Gastrocnemius medialis (tissue), 4 donors: ENCODE measurements at regions of chr19 and their contacts with region 1.

Region 1: GRCh38 chr19:47256688-47257443 is 541 bp downstream of the CCDC9 start:
- DNase-seq: peak; percentile 100
- ATAC-seq: peak; percentile 78 to 84
- H3K4me3 ChIP-seq: peak overlapping the region; percentile 50 to 72 (median 70)
- H3K27ac ChIP-seq: peak overlapping the region; percentile 82 to 95 (median 91)
- H3K4me1 ChIP-seq: peaks cover 16% of the 10 kb centered on the region in 2 donors
- H3K27me3 ChIP-seq: no peaks in the 10 kb centered on the region
- CTCF ChIP-seq: no peak
- POLR2A ChIP-seq: no peak

Region 2: DNA sequence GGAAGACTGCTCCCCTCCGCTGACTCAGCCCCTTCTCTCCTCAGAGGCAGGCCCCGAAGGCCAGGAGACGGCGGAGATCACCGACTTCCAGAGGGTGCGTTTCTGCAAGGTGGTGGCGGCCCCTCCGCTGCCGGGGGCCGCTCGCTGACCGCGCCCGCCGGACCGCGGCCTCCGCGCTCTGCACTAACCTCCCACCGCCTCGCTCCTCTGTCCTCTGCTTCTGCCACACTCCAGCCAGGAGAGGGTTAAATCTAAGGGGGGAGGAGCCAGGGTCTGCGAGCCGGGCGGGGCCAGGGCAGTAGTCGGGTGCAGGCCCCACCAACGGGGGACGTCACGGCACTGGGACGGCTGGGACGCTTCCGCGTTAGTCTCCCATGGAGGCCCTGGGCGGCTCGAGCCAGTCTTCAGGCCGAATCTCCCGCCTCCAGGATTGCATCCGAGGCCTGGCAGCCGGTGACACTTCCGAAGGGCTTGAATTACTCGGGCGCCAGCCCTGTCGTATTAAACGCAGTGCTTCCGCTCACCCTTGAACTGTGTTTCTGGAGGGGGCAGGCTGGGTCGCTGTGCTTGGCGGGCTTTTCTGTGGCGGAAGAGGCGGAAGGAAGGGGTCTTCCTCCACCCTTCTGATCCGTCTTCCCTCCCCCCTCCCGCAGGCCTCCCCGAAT is 16.6 kb after region 1 on chr19:
- in situ Hi-C with region 1: no loop called
- intact Hi-C with region 1: loop called (anchors 1 kb)
- DNase-seq: peak; percentile 77 to 81
- ATAC-seq: peak; percentile 45 to 55
- H3K4me3 ChIP-seq: peak overlapping the region; percentile 60 to 74 (median 70)
- H3K27ac ChIP-seq: peak overlapping the region; percentile 88 to 95 (median 92)
- H3K4me1 ChIP-seq: peaks cover 15 to 35% of the 10 kb centered on the region in 2 donors
- H3K27me3 ChIP-seq: no peaks in the 10 kb centered on the region
- CTCF ChIP-seq: no peak
- POLR2A ChIP-seq: peak; percentile 55 to 70

Region 3: GRCh38 chr19:47336853-47337279 is 80.0 kb after region 1 on chr19:
- in situ Hi-C with region 1: no loop called
- intact Hi-C with region 1: no loop called
- DNase-seq: peak in 1 of 2 donors; percentile 48
- ATAC-seq: no peak
- H3K4me3 ChIP-seq: no peak overlapping the region
- H3K27ac ChIP-seq: no peak overlapping the region
- H3K4me1 ChIP-seq: no peaks in the 10 kb centered on the region
- H3K27me3 ChIP-seq: peaks cover 0 to 4% (median 2%) of the 10 kb centered on the region in 3 donors
- CTCF ChIP-seq: no peak
- POLR2A ChIP-seq: no peak

Region 4: GRCh38 chr19:47790398-47790814 is 533.5 kb after region 1 on chr19:
- in situ Hi-C with region 1: no loop called
- intact Hi-C with region 1: no loop called
- DNase-seq: peak in 1 of 2 donors; percentile 54
- ATAC-seq: no peak
- H3K4me3 ChIP-seq: no peak overlapping the region
- H3K27ac ChIP-seq: no peak overlapping the region
- H3K4me1 ChIP-seq: peaks cover 13 to 16% of the 10 kb centered on the region in 2 donors
- H3K27me3 ChIP-seq: no peaks in the 10 kb centered on the region
- CTCF ChIP-seq: peak in 4 of 5 experiments; percentile 69 to 90 (median 77)
- POLR2A ChIP-seq: no peak